ENCODE measurements at regions of chr11 and their contacts with region 1.

Region 1: DNA sequence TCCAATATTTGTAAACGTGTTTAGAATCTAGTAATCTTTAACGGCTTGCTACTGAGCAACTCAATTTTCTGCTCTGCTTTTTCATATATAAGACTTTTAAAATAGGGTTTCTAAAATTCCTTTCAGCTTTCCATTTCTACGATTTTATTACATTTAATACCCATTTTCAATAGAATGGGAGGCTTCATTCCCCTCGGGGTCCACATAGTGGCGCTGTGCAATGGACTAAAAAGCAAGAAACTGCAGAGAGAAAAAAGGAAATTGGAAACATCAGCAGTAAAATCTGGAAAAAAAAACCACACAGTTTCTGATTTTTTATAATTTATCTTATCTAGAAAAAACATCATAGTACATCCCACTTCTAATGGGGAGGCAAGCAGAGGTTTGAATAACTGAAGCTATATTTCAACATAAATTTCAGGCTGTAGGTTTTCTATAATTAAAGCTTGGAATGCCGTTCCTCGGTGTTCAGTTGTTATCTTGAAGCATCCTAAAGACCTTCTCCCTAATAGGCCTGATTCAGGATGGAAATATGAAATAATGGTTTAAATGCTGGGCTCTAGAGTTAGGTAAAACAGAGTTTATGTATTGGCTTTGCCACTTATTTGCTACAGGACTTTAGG is 18.7 kb upstream of the JHY start:
- DNase-seq: peak; percentile 28 to 65
- H3K4me3 ChIP-seq: no peak overlapping the region
- H3K4me3 Mint-ChIP-seq: no peak overlapping the region
- H3K27ac Mint-ChIP-seq: no peak overlapping the region
- H3K4me1 ChIP-seq: peaks cover 8% of the 10 kb centered on the region; the same call in 1 of the 2 replicates
- H3K4me1 Mint-ChIP-seq: no peaks in the 10 kb centered on the region
- H3K27me3 ChIP-seq: no peaks in the 10 kb centered on the region
- H3K27me3 Mint-ChIP-seq: peaks cover 43% of the 10 kb centered on the region
- CTCF ChIP-seq: peak; percentile 89 to 97

Region 2: GRCh38 chr11:122910775-122911174 is 47.0 kb after region 1 on chr11:
- CTCF ChIA-PET with region 1: interaction called, 3 read pairs
- POLR2A ChIA-PET with region 1: no interaction called
- intact Hi-C with region 1: loop called (anchors 5 kb)
- DNase-seq: peak in 1 of 2 experiments; percentile 51
- H3K4me3 ChIP-seq: no peak overlapping the region
- H3K4me3 Mint-ChIP-seq: no peak overlapping the region
- H3K27ac Mint-ChIP-seq: no peak overlapping the region
- H3K4me1 ChIP-seq: no peaks in the 10 kb centered on the region
- H3K4me1 Mint-ChIP-seq: no peaks in the 10 kb centered on the region
- H3K27me3 ChIP-seq: peaks cover 1% of the 10 kb centered on the region; the same call in 1 of the 2 replicates
- H3K27me3 Mint-ChIP-seq: peaks cover 16% of the 10 kb centered on the region
- CTCF ChIP-seq: peak; percentile 35 to 51